ENCODE measurements at regions of chr2 and their contacts with region 1.

Region 1: GRCh38 chr2:234951664-234952269 is at the start of gene SH3BP4:
- DNase-seq: peak; percentile 54
- ATAC-seq: peak; percentile 79
- H3K4me3 ChIP-seq: peak within 1 kb of the TSS; percentile 74 to 93 (median 76)
- H3K27ac ChIP-seq: peak within 1 kb of the TSS; percentile 56
- H3K4me1 ChIP-seq: peaks cover 57% of the 10 kb centered on the region
- H3K27me3 ChIP-seq: no peaks in the 10 kb centered on the region; a peak in 2 of 5 replicates
- CTCF ChIP-seq: no peak
- EP300 ChIP-seq: no peak
- POLR2A ChIP-seq: peak in 1 of 2 experiments; percentile 50; a peak in 2 of 4 replicates
- RAD21 ChIP-seq: peak; percentile 58; the same call in 1 of the 2 replicates
- total RNA-seq, gene SH3BP4: 34.6 and 44.3 TPM in 2 replicates

Region 2: GRCh38 chr2:234335661-234336228 is 616.0 kb before region 1 on chr2:
- CTCF ChIA-PET with region 1: no interaction called
- POLR2A ChIA-PET with region 1: no interaction called
- in situ Hi-C with region 1: no loop called
- intact Hi-C with region 1: no loop called
- DNase-seq: no peak
- ATAC-seq: no peak
- H3K4me3 ChIP-seq: no peak overlapping the region
- H3K27ac ChIP-seq: no peak overlapping the region
- H3K4me1 ChIP-seq: no peaks in the 10 kb centered on the region
- H3K27me3 ChIP-seq: peaks cover 0 to 47% of the 10 kb centered on the region in 2 experiments; a peak in 3 of 5 replicates
- CTCF ChIP-seq: no peak
- EP300 ChIP-seq: no peak
- POLR2A ChIP-seq: no peak
- RAD21 ChIP-seq: no peak

Region 3: GRCh38 chr2:234679741-234680687 is 271.8 kb before region 1 on chr2:
- CTCF ChIA-PET with region 1: no interaction called
- POLR2A ChIA-PET with region 1: interaction called, 4 read pairs
- in situ Hi-C with region 1: no loop called
- intact Hi-C with region 1: loop called (anchors 5 kb)
- DNase-seq: peak; percentile 98
- ATAC-seq: peak; percentile 93
- H3K4me3 ChIP-seq: peak overlapping the region in 1 of 3 experiments; percentile 5; a peak in 1 of 6 replicates
- H3K27ac ChIP-seq: peak overlapping the region; percentile 86
- H3K4me1 ChIP-seq: peaks cover 97% of the 10 kb centered on the region
- H3K27me3 ChIP-seq: no peaks in the 10 kb centered on the region
- CTCF ChIP-seq: no peak
- EP300 ChIP-seq: peak; percentile 38 to 97; a peak in 3 of 4 replicates
- POLR2A ChIP-seq: no peak
- RAD21 ChIP-seq: peak; percentile 61; the same call in 1 of the 2 replicates

Region 4: DNA sequence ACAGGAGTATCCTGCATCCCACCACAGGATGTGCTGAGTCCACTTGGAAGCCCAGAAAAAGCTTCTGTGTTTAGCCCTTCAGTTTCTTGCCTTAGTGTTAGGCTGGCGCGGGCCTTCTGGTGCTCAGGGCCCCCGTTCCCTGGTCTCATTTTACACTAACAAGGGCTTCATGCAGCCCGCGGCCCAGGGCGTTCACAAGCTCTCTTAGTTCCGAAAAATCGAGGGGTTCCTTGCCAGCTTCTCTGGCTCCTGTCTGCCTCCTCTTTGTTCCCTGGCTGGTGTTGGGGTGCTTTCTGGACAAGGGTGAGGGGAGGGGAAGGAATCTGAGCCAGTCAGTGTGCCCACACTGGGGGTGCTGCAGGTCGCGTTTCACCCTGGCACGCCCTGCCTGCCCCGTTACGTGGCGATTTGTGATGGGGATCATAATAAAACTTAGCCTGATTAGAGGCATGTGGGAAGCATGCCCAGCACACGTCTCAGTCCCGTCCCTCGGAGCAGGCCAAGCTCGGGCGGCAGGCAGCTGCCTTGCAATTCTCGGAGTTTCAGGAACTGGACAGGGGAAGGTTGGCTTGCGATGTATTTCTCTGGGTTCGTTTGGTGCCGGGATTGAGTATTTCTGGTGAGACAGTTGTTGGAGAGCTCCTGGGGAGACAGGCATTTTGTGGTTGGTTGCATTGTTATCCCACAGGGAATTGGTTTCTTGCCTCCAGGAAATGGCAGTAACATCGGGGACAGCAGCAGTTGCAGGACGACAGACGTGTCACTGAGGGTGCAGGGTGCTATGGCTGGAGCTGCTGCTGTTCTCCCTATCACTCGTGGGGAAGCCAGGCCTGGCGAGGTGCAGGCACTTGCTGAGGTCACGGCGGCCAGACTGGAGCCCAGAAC is 23.0 kb after region 1 on chr2:
- CTCF ChIA-PET with region 1: no interaction called
- POLR2A ChIA-PET with region 1: interaction called, 53 read pairs
- in situ Hi-C with region 1: no loop called
- intact Hi-C with region 1: loop called (anchors 2 kb)
- DNase-seq: no peak
- ATAC-seq: no peak
- H3K4me3 ChIP-seq: no peak overlapping the region
- H3K27ac ChIP-seq: no peak overlapping the region
- H3K4me1 ChIP-seq: peaks cover 82% of the 10 kb centered on the region
- H3K27me3 ChIP-seq: no peaks in the 10 kb centered on the region
- CTCF ChIP-seq: no peak
- EP300 ChIP-seq: no peak
- POLR2A ChIP-seq: no peak
- RAD21 ChIP-seq: no peak

Region 5: GRCh38 chr2:234996069-234996940 is 44.5 kb after region 1 on chr2:
- CTCF ChIA-PET with region 1: no interaction called
- POLR2A ChIA-PET with region 1: interaction called, 6 read pairs
- in situ Hi-C with region 1: no loop called
- intact Hi-C with region 1: loop called (anchors 2 kb)
- DNase-seq: peak; percentile 86
- ATAC-seq: peak; percentile 13
- H3K4me3 ChIP-seq: peak overlapping the region in 1 of 3 experiments; percentile 2; a peak in 1 of 6 replicates
- H3K27ac ChIP-seq: peak overlapping the region; percentile 75
- H3K4me1 ChIP-seq: peaks cover 100% of the 10 kb centered on the region
- H3K27me3 ChIP-seq: no peaks in the 10 kb centered on the region
- CTCF ChIP-seq: no peak
- EP300 ChIP-seq: peak in 1 of 2 experiments; percentile 33; a peak in 1 of 4 replicates
- POLR2A ChIP-seq: no peak
- RAD21 ChIP-seq: peak; percentile 19; the same call in 1 of the 2 replicates

Measured in HepG2 (cell line).